ENCODE measurements at regions of chr1 and their contacts with region 1.

Region 1: GRCh38 chr1:109532365-109533136 is 7.1 kb upstream of the GPR61 start:
- DNase-seq: peak; percentile 88
- ATAC-seq: peak; percentile 83

Region 2: GRCh38 chr1:109282952-109283747 is 249.4 kb before region 1 on chr1 and contains the start of gene PSRC1:
- intact Hi-C with region 1: loop called (anchors 5 kb)
- DNase-seq: peak; percentile 97
- ATAC-seq: peak; percentile 99
- total RNA-seq, gene PSRC1: 1.2 TPM

Region 3: DNA sequence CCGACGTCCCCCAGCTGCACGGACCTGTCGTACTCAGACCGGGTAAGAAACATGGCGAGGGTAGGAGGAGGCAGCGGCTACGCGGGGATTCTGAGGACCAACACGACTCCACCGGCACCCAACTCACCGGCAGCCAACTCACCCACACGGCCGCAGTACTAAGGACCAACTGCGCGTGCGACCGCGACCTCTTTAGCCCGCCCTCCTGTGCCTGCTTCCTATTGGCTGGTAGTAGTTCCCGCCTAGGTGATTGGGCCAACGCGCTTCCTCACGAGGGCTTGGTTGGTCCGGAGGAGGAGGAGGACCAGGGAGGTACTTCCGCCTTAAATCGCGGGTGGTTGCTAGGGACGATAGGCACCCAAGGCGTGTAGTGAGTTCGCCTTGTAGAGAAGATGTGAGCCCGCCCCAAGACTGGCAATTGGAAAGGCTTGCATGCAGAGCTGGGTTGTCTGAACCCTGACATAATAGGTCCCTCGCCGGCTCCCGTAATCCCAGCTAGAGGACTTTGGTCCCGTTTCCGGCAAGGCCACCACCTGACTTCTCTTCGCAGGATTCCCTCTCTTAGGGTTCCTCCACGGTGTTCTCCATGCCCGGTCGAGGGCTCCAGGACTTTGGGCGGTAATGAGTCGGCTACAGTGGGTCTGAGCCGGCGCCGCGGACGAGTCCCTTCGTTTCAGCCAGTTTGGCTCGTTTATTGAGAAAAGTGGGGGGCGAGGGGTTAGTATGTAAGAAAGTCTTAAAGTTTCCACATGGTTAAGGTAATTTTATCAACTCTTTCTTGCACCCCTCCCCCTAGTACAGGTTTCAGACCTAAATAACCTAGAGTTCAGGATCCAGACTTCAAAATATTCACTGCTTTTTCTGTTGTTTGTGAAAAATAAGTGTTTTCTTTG is 106.0 kb before region 1 on chr1 and contains the start of gene PSMA5:
- intact Hi-C with region 1: loop called (anchors 5 kb)
- DNase-seq: peak; percentile 97
- ATAC-seq: peak; percentile 100
- total RNA-seq, gene PSMA5: 62.4 TPM

Region 4: DNA sequence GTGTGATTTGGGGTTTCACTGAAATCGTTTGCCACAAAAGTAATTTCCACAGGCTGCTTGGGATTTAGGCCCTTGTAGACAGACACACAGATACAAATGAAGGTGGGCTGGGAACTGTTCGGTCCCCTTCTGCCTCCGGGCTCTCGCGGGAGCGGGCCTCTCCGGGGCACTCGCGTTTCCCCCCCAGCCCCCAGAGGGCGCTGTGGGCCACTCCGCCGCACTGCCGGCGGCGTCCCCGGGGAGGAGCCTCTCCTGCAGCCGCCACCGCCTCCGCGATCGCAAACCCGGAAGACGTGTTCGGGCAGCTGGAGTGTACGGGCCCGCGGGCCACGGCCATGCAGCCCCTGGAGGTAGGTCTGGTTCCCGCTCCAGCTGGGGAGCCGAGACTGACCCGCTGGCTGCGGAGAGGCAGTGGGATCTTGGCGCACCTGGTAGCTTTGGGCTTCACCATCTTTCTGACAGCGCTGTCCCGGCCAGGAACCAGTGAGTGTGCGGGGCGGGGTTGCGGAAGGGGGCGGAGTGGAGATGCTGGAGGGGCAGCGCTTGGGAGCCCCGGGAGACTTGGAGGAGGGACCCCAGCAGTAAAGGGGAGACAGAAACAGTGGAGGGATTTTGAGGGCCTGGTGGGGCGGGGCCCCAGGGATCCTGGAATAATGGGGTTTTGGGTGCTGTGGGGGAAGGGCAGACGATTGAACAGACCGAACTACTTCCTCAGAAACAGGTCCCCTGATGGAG is 38.6 kb before region 1 on chr1 and contains the start of gene CYB561D1:
- intact Hi-C with region 1: loop called (anchors 2 kb)
- DNase-seq: peak; percentile 94
- ATAC-seq: peak; percentile 93
- total RNA-seq, gene CYB561D1: 5.8 TPM